Heart left ventricle (tissue), 16 donors: ENCODE measurements at regions of chr11 and their contacts with region 1.

Region 1: DNA sequence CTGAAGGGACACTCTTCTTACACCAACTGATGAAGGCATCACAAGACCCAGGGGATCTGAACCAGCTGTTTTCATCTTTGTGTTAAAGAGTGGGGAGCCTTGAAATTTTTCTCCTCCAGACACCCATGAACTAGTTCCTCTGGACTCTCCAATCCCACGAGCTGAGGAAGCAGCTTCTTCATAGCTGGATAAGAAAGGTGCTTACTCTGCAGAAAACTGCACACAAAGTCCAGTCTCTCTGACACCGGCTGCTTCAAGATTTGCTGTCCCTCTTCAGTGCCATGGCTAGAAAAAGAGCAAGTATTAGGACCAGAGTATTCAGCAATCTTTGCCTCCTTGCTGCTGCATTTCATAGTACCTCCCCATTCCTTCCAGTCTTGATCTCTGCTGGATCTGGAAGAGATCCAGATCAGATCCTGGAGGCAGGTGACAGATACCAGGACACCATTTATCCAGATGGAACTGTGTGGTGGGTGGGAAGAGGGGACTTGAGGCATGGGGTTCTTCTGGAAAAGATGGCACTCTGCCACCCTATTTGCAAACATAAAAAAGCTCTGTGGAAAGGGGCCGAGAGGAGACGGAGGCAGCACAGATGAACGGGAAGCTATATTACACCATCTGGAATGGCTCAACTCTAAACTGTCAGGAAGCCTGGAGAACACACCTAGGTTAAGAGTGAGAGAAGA is 25.5 kb downstream of the IL18BP start:
- DNase-seq: no peak
- ATAC-seq: no peak
- H3K4me3 ChIP-seq: no peak overlapping the region
- H3K27ac ChIP-seq: peak overlapping the region in 2 of 12 donors; percentile 30 to 72
- H3K4me1 ChIP-seq: peaks cover 0 to 45% (median 30%) of the 10 kb centered on the region in 12 donors
- H3K27me3 ChIP-seq: no peaks in the 10 kb centered on the region
- CTCF ChIP-seq: no peak
- POLR2A ChIP-seq: no peak

Region 2: DNA sequence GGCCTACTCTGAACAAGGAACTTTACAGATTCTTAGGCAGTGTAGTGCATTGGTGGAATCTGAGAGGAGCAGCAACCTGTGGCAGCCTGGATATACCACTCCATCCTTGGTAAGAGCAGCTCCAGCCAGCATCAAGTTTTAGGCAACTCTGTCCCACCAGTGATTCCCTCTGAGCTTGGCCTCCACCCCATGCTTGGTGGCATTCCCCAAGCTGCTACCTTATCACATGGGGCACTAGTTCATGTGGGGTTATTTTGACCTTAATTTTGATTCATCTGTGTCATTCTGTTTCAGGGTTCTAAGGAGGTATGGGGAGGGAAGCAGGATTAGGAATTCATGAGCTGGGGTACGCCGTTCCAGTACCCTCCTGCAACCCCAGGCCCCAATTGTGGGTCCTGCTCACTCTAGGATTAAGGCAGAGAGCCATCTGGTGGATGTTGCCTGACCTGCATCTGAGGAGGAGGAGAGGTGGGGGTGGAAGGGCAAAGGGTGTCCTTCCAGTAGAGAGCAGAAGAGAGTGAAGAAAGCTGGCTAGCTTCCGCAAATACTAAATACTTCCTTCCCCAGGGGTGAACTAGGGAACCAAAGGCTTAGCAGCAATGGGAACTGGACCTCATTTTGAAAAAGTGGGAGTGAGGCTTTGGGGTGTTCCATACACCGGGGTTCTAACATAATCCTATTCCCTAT is 66.9 kb after region 1 on chr11:
- intact Hi-C with region 1: loop called (anchors 1 to 5 kb)
- DNase-seq: peak in 4 of 5 donors; percentile 73 to 78 (median 74)
- ATAC-seq: peak; percentile 73 to 95 (median 92)
- H3K4me3 ChIP-seq: no peak overlapping the region
- H3K27ac ChIP-seq: peak overlapping the region in 4 of 12 donors; percentile 12 to 77 (median 36)
- H3K4me1 ChIP-seq: peaks cover 0 to 25% (median 8%) of the 10 kb centered on the region in 12 donors
- H3K27me3 ChIP-seq: no peaks in the 10 kb centered on the region
- CTCF ChIP-seq: peak; percentile 79 to 92 (median 84)
- POLR2A ChIP-seq: no peak

Region 3: GRCh38 chr11:72141066-72141465 is 116.9 kb after region 1 on chr11:
- intact Hi-C with region 1: loop called in 6 of 10 experiments (anchors 1 to 5 kb)
- DNase-seq: no peak
- ATAC-seq: no peak
- H3K4me3 ChIP-seq: no peak overlapping the region
- H3K27ac ChIP-seq: no peak overlapping the region
- H3K4me1 ChIP-seq: peaks cover 0 to 5% (median 0%) of the 10 kb centered on the region in 12 donors
- H3K27me3 ChIP-seq: no peaks in the 10 kb centered on the region
- CTCF ChIP-seq: no peak
- POLR2A ChIP-seq: no peak